Activated CD8-positive, alpha-beta T cell treated with anti-CD3 and anti-CD28 coated beads for 36 hours (primary cell): ENCODE measurements at regions of chr1 and their contacts with region 1.

Region 1: GRCh38 chr1:108828022-108828961 is 28.6 kb downstream of the AKNAD1 start:
- DNase-seq: peak; percentile 86
- ATAC-seq: peak; percentile 74
- H3K4me3 Mint-ChIP-seq: no peak overlapping the region
- H3K27ac Mint-ChIP-seq: no peak overlapping the region
- H3K4me1 Mint-ChIP-seq: no peaks in the 10 kb centered on the region
- H3K27me3 Mint-ChIP-seq: no peaks in the 10 kb centered on the region
- CTCF ChIP-seq: peak; percentile 74

Region 2: GRCh38 chr1:108639899-108640560 is 188.3 kb before region 1 on chr1:
- CTCF ChIA-PET with region 1: no interaction called
- POLR2A ChIA-PET with region 1: no interaction called
- intact Hi-C with region 1: no loop called
- DNase-seq: peak; percentile 83
- ATAC-seq: peak; percentile 45
- H3K4me3 Mint-ChIP-seq: peak overlapping the region; percentile 44
- H3K27ac Mint-ChIP-seq: peak overlapping the region; percentile 91
- H3K4me1 Mint-ChIP-seq: peaks cover 41% of the 10 kb centered on the region
- H3K27me3 Mint-ChIP-seq: no peaks in the 10 kb centered on the region
- CTCF ChIP-seq: no peak

Region 3: GRCh38 chr1:108816049-108816893 is 12.0 kb before region 1 on chr1:
- CTCF ChIA-PET with region 1: interaction called, 51 read pairs
- POLR2A ChIA-PET with region 1: no interaction called
- intact Hi-C with region 1: no loop called
- DNase-seq: no peak
- ATAC-seq: no peak
- H3K4me3 Mint-ChIP-seq: no peak overlapping the region
- H3K27ac Mint-ChIP-seq: no peak overlapping the region
- H3K4me1 Mint-ChIP-seq: no peaks in the 10 kb centered on the region
- H3K27me3 Mint-ChIP-seq: no peaks in the 10 kb centered on the region
- CTCF ChIP-seq: no peak

Region 4: DNA sequence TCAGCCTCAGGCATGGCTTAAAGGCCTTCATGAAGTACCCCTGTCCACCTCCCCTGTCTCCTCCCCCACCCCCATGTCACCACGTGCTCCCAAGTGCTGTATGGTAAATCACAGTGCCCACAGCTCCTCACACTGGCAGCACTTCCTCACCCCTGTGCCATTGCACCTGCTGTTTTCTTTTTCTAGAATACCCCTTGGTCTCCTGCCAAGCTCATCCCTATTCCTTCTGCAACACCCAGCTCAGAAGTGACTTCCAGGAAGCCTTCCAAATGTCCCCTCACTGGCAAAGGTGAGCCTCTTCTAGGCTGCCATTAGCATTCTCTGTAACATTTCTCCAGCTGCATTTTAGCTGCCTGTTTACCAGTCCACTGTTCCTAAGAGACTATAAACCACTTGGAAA is 19.2 kb after region 1 on chr1:
- CTCF ChIA-PET with region 1: interaction called, 74 read pairs
- POLR2A ChIA-PET with region 1: no interaction called
- intact Hi-C with region 1: no loop called
- DNase-seq: no peak
- ATAC-seq: no peak
- H3K4me3 Mint-ChIP-seq: no peak overlapping the region
- H3K27ac Mint-ChIP-seq: no peak overlapping the region
- H3K4me1 Mint-ChIP-seq: peaks cover 4% of the 10 kb centered on the region
- H3K27me3 Mint-ChIP-seq: peaks cover 6% of the 10 kb centered on the region
- CTCF ChIP-seq: no peak

Region 5: DNA sequence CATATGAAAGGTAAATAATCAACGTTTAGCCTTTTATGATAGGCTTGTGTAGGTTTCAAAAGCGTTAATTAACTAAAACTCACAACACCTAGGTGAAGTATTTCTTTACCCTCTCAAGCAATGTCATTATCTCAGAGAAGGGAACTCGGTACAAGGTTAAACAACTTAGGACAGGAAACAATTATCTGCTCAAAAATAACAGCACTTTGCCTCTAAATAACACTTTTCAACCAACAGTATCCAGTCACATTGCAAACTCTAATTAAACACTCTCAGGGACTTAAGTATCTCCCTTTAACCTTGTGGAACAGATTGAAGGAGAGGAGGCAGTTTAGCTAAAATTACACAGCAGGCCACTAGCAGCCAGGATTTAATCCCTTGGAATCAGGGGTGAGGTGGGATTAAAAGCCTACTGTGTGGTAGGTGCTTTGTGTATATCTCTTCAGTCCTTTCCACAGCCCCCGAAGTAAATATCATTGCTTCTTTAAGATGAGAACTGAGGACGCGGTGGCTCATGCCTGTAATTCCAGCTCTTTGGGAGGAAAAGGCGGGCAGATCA is 33.8 kb after region 1 on chr1:
- CTCF ChIA-PET with region 1: interaction called, 10 read pairs
- POLR2A ChIA-PET with region 1: no interaction called
- intact Hi-C with region 1: no loop called
- DNase-seq: no peak
- ATAC-seq: no peak
- H3K4me3 Mint-ChIP-seq: no peak overlapping the region
- H3K27ac Mint-ChIP-seq: no peak overlapping the region
- H3K4me1 Mint-ChIP-seq: peaks cover 2% of the 10 kb centered on the region
- H3K27me3 Mint-ChIP-seq: peaks cover 18% of the 10 kb centered on the region
- CTCF ChIP-seq: no peak

Region 6: DNA sequence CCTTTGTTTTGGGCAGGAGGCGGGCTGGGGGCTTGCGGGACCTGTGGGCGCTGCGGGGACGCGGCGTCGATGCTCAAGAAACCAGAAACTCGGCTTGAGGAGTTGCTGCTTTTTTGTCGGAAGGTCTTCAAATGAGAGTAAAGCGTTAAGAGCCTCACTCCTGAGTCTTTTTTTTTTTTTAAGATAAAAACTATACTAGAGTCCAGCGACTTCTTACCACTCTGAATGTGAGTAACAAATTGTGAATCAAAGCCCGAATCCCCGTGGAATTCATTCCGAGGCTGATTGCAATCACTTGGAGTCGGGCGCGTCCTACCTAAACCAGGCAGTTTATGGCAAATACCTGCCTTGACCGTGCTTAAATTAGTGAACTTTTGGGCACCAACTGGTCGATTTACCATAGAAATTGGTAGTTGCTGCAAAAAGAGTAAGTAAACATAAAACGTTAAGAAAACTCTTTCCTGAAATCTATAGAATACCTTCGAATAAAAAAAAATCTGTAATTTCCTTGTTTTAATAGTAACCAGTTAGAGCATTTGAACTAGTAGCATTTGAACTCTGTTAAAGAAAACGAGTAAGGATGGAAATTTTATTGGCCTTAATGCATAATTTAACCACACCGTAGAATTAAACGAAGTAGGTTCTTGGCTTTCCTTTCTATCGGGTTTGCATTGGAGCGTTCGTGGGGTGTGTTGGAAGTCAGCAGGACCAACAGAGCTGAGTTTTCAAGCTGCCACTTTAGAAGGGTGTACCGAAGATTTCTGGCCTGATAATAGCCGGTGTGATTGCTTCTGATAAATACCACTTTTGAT is 49.3 kb after region 1 on chr1:
- CTCF ChIA-PET with region 1: interaction called, 11 read pairs
- POLR2A ChIA-PET with region 1: no interaction called
- intact Hi-C with region 1: no loop called
- DNase-seq: peak; percentile 7
- ATAC-seq: no peak
- H3K4me3 Mint-ChIP-seq: peak overlapping the region; percentile 86
- H3K27ac Mint-ChIP-seq: peak overlapping the region; percentile 48
- H3K4me1 Mint-ChIP-seq: peaks cover 6% of the 10 kb centered on the region
- H3K27me3 Mint-ChIP-seq: peaks cover 16% of the 10 kb centered on the region
- CTCF ChIP-seq: no peak

Region 7: GRCh38 chr1:108889706-108890384 is 61.6 kb after region 1 on chr1:
- CTCF ChIA-PET with region 1: interaction called, 184 read pairs
- POLR2A ChIA-PET with region 1: no interaction called
- intact Hi-C with region 1: no loop called
- DNase-seq: no peak
- ATAC-seq: no peak
- H3K4me3 Mint-ChIP-seq: no peak overlapping the region
- H3K27ac Mint-ChIP-seq: no peak overlapping the region
- H3K4me1 Mint-ChIP-seq: no peaks in the 10 kb centered on the region
- H3K27me3 Mint-ChIP-seq: peaks cover 5% of the 10 kb centered on the region
- CTCF ChIP-seq: no peak

Region 8: GRCh38 chr1:108897865-108898720 is 69.8 kb after region 1 on chr1:
- CTCF ChIA-PET with region 1: interaction called, 184 read pairs
- POLR2A ChIA-PET with region 1: no interaction called
- intact Hi-C with region 1: loop called (anchors 1 kb)
- DNase-seq: peak; percentile 42
- ATAC-seq: peak; percentile 81
- H3K4me3 Mint-ChIP-seq: no peak overlapping the region
- H3K27ac Mint-ChIP-seq: no peak overlapping the region
- H3K4me1 Mint-ChIP-seq: no peaks in the 10 kb centered on the region
- H3K27me3 Mint-ChIP-seq: no peaks in the 10 kb centered on the region
- CTCF ChIP-seq: peak; percentile 59